Mammary epithelial cell (primary cell): ENCODE measurements at regions of chr3 and their contacts with region 1.

Region 1: GRCh38 chr3:159260049-159260662 is 458.3 kb downstream of the MFSD1 start:
- DNase-seq: peak; percentile 42
- H3K4me3 ChIP-seq: no peak overlapping the region
- H3K27ac ChIP-seq: no peak overlapping the region
- H3K4me1 ChIP-seq: no peaks in the 10 kb centered on the region
- H3K27me3 ChIP-seq: peaks cover 2% of the 10 kb centered on the region
- CTCF ChIP-seq: peak; percentile 65 to 70

Region 2: DNA sequence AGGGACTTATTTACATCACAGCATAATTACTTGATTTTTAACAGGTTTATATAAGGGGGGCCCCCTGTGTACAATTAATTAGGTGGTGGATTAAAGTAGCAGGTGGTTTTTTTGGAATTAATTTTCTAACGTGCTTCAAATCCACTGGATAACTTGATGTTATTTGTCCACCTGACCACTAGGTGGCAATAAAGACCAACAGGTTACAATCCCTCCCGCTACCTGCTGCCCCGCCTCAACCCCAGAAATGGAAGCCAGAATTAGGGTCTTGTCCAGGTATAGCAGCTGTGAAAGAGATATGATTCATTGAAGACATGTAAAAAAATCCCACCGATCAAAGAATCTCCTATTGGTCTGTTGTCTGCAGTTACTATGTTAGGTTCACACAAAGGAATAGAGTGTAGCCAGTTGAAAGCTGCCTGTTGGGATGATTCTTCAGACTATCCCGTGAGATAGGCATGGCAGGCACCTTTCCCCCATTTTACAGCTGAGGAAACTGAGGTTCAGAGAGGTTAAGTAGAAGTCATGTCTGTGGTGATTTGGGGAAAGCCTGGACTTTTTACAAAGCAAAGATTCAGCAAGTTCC is 414.3 kb before region 1 on chr3:
- CTCF ChIA-PET with region 1: interaction called, 4 read pairs
- dilution Hi-C with region 1: no loop called
- in situ Hi-C with region 1: loop called (anchors 5 to 10 kb)
- intact Hi-C with region 1: loop called (anchors 1 kb)
- DNase-seq: no peak
- H3K4me3 ChIP-seq: no peak overlapping the region
- H3K27ac ChIP-seq: no peak overlapping the region
- H3K4me1 ChIP-seq: no peaks in the 10 kb centered on the region
- H3K27me3 ChIP-seq: peaks cover 2% of the 10 kb centered on the region
- CTCF ChIP-seq: peak; percentile 52 to 69

Region 3: GRCh38 chr3:158918008-158918407 is 342.1 kb before region 1 on chr3:
- CTCF ChIA-PET with region 1: no interaction called
- dilution Hi-C with region 1: loop called (anchors 25 kb)
- in situ Hi-C with region 1: loop called in 1 of 2 experiments (anchors 5 kb)
- intact Hi-C with region 1: no loop called
- DNase-seq: peak; percentile 61
- H3K4me3 ChIP-seq: no peak overlapping the region
- H3K27ac ChIP-seq: no peak overlapping the region
- H3K4me1 ChIP-seq: no peaks in the 10 kb centered on the region
- H3K27me3 ChIP-seq: no peaks in the 10 kb centered on the region
- CTCF ChIP-seq: peak; percentile 82 to 84

Region 4: DNA sequence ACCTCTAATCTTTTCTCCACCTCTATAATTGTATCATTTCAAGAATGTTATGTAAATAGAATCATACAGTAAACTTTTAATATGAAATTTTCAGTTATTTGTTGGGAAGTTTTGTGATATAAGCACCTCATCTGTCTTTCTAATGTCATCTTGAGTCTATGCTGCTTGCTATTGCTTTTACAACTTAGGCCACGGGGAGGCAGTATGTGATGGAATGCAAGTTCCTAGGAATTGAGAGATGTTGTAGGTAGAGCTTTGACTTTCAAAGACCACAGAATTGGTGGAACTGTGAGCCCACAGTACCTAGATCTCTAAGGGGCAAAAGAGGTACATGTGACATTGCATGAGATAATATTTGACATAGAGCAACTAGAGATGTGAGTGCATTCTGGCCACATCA is 130.0 kb before region 1 on chr3:
- CTCF ChIA-PET with region 1: no interaction called
- dilution Hi-C with region 1: no loop called
- in situ Hi-C with region 1: no loop called
- intact Hi-C with region 1: no loop called
- DNase-seq: no peak
- H3K4me3 ChIP-seq: no peak overlapping the region
- H3K27ac ChIP-seq: no peak overlapping the region
- H3K4me1 ChIP-seq: peaks cover 30% of the 10 kb centered on the region
- H3K27me3 ChIP-seq: no peaks in the 10 kb centered on the region
- CTCF ChIP-seq: peak; percentile 26 to 41

Region 5: GRCh38 chr3:159311400-159311799 is 51.2 kb after region 1 on chr3:
- CTCF ChIA-PET with region 1: no interaction called
- dilution Hi-C with region 1: no loop called
- in situ Hi-C with region 1: no loop called
- intact Hi-C with region 1: no loop called
- DNase-seq: no peak
- H3K4me3 ChIP-seq: no peak overlapping the region
- H3K27ac ChIP-seq: no peak overlapping the region
- H3K4me1 ChIP-seq: no peaks in the 10 kb centered on the region
- H3K27me3 ChIP-seq: no peaks in the 10 kb centered on the region
- CTCF ChIP-seq: no peak

Region 6: DNA sequence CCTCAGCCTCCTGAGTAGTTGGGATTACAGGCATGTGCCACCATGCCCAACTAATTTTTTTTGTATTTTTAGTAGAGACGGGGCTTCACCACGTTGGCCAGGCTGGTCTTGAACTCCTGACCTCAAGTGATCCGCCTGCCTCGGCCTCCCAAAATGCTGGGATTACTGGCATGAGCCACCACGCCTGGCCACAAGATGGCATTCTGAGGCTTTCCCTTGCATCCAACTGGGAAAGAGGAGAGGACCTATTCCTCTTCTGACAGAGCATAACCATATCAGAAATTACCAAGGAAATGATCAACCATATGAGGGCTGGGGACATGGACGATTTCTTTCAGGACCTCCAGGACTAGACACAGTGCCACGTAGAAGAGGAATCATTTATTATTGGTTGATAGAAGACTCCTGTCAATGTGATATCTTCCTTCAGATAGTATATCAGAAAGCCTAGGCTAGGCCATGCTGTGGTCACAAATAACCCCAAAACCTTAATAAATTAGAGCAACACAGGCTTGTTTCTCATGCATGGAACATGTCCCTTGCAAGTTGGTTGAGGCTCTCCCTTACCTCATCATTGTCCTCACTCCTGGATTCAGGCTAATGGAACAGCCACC is 356.2 kb after region 1 on chr3:
- CTCF ChIA-PET with region 1: no interaction called
- dilution Hi-C with region 1: no loop called
- in situ Hi-C with region 1: no loop called
- intact Hi-C with region 1: loop called (anchors 2 kb)
- DNase-seq: peak; percentile 48
- H3K4me3 ChIP-seq: no peak overlapping the region
- H3K27ac ChIP-seq: no peak overlapping the region
- H3K4me1 ChIP-seq: peaks cover 14% of the 10 kb centered on the region
- H3K27me3 ChIP-seq: no peaks in the 10 kb centered on the region
- CTCF ChIP-seq: peak; percentile 49 to 70

Region 7: GRCh38 chr3:159813822-159814523 is 553.8 kb after region 1 on chr3:
- CTCF ChIA-PET with region 1: no interaction called
- dilution Hi-C with region 1: no loop called
- in situ Hi-C with region 1: loop called (anchors 10 to 25 kb)
- intact Hi-C with region 1: no loop called
- DNase-seq: peak; percentile 89
- H3K4me3 ChIP-seq: no peak overlapping the region
- H3K27ac ChIP-seq: peak overlapping the region; percentile 89
- H3K4me1 ChIP-seq: peaks cover 25% of the 10 kb centered on the region
- H3K27me3 ChIP-seq: no peaks in the 10 kb centered on the region
- CTCF ChIP-seq: no peak

Region 8: DNA sequence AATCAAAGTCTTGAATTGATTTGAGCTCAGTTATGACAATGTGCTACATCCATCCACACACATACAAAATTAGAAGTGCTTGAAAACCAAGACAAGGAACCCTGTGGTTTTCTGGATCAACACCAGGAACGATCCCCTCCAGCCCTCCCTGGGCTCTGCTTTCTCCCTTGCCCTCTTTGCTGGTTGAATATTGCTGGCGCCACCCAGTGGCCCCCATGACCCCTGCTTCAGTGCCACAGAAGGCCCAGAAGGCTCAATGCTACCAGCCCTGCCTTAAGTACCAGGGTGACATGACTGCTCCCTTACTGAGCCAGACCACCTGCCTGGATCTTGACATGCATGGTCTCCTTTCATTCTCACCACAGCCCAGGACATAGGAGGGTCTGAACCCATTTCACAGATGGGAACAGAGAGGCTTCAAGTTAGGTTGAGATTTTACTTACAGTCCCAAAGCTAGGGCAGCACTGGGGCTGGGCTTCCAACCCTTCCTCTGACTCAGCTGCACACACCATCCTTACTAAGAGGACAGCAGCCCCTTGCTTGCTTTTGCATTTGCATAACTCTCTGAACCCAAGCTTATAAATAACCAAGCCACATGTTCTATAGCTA is 743.5 kb after region 1 on chr3:
- CTCF ChIA-PET with region 1: interaction called, 4 read pairs
- dilution Hi-C with region 1: no loop called
- in situ Hi-C with region 1: loop called (anchors 10 to 25 kb)
- intact Hi-C with region 1: loop called (anchors 1 kb)
- DNase-seq: peak; percentile 41
- H3K4me3 ChIP-seq: no peak overlapping the region
- H3K27ac ChIP-seq: no peak overlapping the region
- H3K4me1 ChIP-seq: no peaks in the 10 kb centered on the region
- H3K27me3 ChIP-seq: no peaks in the 10 kb centered on the region
- CTCF ChIP-seq: peak; percentile 44 to 69

Region 9: DNA sequence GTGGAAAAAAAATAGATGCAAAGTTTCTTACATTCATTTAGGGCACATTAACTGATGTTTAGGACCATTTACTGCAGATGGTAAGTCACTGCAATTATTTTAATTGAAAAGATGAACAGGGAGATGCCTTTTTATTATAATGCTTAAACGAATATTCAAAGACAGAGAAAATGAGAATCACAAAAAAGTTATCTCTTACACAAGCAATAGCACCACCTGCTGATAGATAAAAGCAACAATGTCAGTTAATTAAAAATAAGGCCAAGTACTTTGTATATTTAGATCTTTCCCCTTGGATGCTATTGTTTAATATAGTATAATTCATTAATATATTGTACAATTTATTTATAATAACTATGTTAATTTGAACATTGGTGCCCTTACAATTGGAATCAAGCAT is 1083.0 kb after region 1 on chr3:
- CTCF ChIA-PET with region 1: no interaction called
- dilution Hi-C with region 1: no loop called
- in situ Hi-C with region 1: no loop called
- intact Hi-C with region 1: loop called (anchors 10 kb)
- DNase-seq: peak; percentile 4
- H3K4me3 ChIP-seq: no peak overlapping the region
- H3K27ac ChIP-seq: no peak overlapping the region
- H3K4me1 ChIP-seq: no peaks in the 10 kb centered on the region
- H3K27me3 ChIP-seq: no peaks in the 10 kb centered on the region
- CTCF ChIP-seq: peak; percentile 41 to 51